Ovary (tissue), 10 donors: ENCODE measurements at regions of chr1 and their contacts with region 1.

Region 1: GRCh38 chr1:16727190-16728111 is 12.9 kb upstream of the RNU1-4 start:
- DNase-seq: peak in 4 of 5 donors; percentile 40 to 52 (median 52)
- H3K4me3 ChIP-seq: no peak overlapping the region
- H3K27ac ChIP-seq: no peak overlapping the region
- H3K4me1 ChIP-seq: no peaks in the 10 kb centered on the region
- H3K27me3 ChIP-seq: no peaks in the 10 kb centered on the region
- CTCF ChIP-seq: no peak
- EP300 ChIP-seq: no peak
- POLR2A ChIP-seq: no peak

Region 2: DNA sequence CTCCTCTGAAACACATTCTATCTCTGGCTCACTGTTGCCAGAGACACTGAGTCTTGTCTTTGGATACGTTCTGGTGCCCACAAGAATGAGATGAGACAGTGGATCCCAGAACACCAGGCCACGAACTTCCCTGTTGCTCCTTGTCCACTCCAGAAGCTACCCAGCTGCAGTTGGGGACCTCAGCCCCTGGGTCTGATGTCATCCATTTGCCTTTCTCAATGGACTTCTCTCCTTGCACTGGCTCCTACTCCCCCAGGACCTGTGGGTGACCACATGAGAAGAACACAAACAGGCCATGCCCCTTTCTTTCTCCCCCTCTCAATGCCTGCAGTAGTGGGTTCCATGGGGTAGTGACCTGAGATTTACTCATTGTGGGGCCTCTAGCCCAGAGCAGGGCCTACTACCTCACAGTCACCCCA is 120.0 kb before region 1 on chr1:
- intact Hi-C with region 1: loop called in 1 of 4 experiments (anchors 10 kb)
- DNase-seq: no peak
- H3K4me3 ChIP-seq: no peak overlapping the region
- H3K27ac ChIP-seq: no peak overlapping the region
- H3K4me1 ChIP-seq: peaks cover 3% of the 10 kb centered on the region
- H3K27me3 ChIP-seq: no peaks in the 10 kb centered on the region
- CTCF ChIP-seq: no peak
- EP300 ChIP-seq: no peak
- POLR2A ChIP-seq: no peak